ENCODE measurements at regions of chr3 and their contacts with region 1.

Region 1: GRCh38 chr3:53169045-53169831 is 8.2 kb downstream of the PRKCD start:
- DNase-seq: no peak
- ATAC-seq: no peak
- H3K4me3 ChIP-seq: no peak overlapping the region
- H3K27ac ChIP-seq: no peak overlapping the region
- H3K4me1 ChIP-seq: no peaks in the 10 kb centered on the region
- H3K27me3 ChIP-seq: no peaks in the 10 kb centered on the region

Region 2: DNA sequence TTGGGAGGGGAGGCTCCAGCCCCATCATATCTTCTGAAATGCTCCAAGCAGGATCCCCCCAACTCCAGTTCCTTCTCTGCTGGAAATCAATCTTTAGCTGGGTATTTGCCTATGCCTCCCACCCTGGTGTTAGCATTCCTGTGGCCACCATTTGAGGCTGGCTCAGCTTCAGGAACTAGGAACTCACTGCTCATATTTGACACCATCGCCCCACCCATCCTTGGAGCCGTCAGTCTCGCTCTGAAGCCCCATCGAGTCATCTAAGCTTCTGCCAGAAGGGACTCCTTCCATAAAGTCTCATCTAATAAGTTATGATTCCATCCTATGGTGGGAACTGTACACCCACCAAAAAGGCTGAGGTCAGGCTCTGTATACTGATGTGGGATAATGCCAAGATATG is 18.2 kb after region 1 on chr3:
- intact Hi-C with region 1: loop called in 1 of 2 experiments (anchors 2 kb)
- DNase-seq: no peak
- ATAC-seq: no peak
- H3K4me3 ChIP-seq: no peak overlapping the region
- H3K27ac ChIP-seq: no peak overlapping the region
- H3K4me1 ChIP-seq: no peaks in the 10 kb centered on the region
- H3K27me3 ChIP-seq: no peaks in the 10 kb centered on the region